Activated CD4-positive, alpha-beta T cell treated with anti-CD3 and anti-CD28 coated beads for 36 hours (primary cell): ENCODE measurements at regions of chr6 and their contacts with region 1.

Region 1: DNA sequence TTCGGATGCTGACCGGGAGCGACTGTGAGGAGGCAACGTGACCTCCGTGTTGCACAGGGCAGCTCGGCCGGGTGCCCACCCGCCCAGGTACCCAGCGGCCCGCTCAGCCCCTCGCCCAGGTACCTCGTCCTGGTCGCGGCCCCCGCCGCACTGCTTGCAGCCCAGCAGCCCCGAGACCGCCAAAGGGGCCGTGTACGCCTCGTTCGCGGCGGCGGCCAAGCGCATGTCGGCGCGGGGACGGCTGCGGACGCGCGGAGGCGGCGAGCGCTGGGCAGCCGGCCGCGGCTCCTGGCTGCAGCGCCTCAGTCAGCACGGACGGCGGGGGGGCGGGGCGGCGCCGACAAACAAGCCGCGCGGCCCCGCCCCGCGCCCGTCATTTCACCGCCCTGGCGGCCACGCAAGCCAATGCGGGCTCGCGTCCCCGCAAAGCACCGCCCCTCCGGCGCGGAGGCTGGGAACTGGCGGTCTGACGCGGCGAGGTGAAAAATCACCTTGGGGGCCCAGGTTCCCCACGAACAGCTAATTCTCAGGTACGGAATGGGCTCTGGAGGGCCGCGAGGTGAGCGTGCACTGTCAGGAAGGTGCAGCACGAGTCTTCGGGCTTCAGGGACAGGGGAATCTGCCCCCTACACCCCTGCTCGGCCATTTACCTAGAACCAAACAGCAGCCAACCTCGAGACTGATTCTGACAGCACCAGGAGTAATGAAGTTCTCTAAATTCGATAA is 85.2 kb downstream of the SESN1 start:
- DNase-seq: peak; percentile 95
- ATAC-seq: peak; percentile 89
- H3K4me3 Mint-ChIP-seq: peak overlapping the region; percentile 94
- H3K27ac Mint-ChIP-seq: peak overlapping the region; percentile 98
- H3K4me1 Mint-ChIP-seq: peaks cover 60% of the 10 kb centered on the region
- H3K27me3 Mint-ChIP-seq: no peaks in the 10 kb centered on the region

Region 2: DNA sequence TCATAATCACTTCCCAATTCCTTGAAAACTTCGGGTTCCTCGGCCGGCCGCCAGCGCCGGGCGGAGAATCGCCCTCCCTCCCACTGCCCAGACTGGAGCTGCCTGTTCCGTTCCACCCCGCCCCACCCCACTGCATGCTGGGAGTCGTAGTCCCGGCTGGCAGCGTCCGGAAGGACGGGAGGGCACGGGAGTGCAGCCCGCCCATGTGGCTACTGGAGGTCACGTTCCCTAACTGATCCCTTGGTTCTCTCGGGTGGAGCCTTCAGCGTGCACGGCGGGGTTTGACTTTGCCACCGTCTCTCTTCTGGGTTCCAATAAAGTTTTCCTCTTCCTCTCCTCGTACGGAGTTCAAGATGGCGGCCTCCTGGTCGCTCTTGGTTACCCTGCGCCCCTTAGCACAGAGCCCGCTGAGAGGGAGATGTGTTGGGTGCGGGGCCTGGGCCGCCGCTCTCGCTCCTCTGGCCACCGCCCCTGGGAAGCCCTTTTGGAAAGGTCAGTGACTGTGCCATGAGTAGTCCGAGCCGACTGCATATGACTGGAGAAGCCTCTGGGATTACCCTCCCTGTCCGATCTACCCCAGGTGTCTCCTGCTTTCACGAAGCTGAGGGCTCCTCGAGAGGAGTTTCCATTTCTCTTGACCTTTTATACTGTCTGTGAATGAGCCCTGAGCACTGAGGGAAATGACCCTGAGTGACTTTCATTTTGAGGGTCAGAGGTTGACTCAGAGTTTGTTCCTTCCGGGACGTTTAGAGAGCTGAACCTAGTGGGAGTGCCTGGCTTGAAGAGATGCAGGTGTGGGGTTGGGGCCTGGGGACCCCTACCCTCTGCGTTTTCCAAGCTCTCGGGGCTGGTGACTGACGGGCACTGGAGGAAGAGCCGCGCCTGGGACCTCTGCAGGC is 714.4 kb before region 1 on chr6 and contains the start of gene AFG1L:
- CTCF ChIA-PET with region 1: no interaction called
- POLR2A ChIA-PET with region 1: no interaction called
- intact Hi-C with region 1: loop called in 1 of 2 experiments (anchors 10 kb)
- DNase-seq: peak; percentile 93
- ATAC-seq: peak; percentile 92
- H3K4me3 Mint-ChIP-seq: peak within 1 kb of the TSS; percentile 99
- H3K27ac Mint-ChIP-seq: peak within 1 kb of the TSS; percentile 100
- H3K4me1 Mint-ChIP-seq: peaks cover 13% of the 10 kb centered on the region
- H3K27me3 Mint-ChIP-seq: no peaks in the 10 kb centered on the region
- total RNA-seq, gene AFG1L: 6.6 TPM

Region 3: GRCh38 chr6:108848116-108848868 is 161.1 kb before region 1 on chr6 and contains the start of gene ARMC2:
- CTCF ChIA-PET with region 1: no interaction called
- POLR2A ChIA-PET with region 1: no interaction called
- intact Hi-C with region 1: loop called in 1 of 2 experiments (anchors 2 kb)
- DNase-seq: peak; percentile 91
- ATAC-seq: peak; percentile 93
- H3K4me3 Mint-ChIP-seq: peak within 1 kb of the TSS; percentile 78
- H3K27ac Mint-ChIP-seq: peak within 1 kb of the TSS; percentile 74
- H3K4me1 Mint-ChIP-seq: peaks cover 23% of the 10 kb centered on the region
- H3K27me3 Mint-ChIP-seq: no peaks in the 10 kb centered on the region
- total RNA-seq, gene ARMC2: 3.9 to 5.2 TPM

Region 4: DNA sequence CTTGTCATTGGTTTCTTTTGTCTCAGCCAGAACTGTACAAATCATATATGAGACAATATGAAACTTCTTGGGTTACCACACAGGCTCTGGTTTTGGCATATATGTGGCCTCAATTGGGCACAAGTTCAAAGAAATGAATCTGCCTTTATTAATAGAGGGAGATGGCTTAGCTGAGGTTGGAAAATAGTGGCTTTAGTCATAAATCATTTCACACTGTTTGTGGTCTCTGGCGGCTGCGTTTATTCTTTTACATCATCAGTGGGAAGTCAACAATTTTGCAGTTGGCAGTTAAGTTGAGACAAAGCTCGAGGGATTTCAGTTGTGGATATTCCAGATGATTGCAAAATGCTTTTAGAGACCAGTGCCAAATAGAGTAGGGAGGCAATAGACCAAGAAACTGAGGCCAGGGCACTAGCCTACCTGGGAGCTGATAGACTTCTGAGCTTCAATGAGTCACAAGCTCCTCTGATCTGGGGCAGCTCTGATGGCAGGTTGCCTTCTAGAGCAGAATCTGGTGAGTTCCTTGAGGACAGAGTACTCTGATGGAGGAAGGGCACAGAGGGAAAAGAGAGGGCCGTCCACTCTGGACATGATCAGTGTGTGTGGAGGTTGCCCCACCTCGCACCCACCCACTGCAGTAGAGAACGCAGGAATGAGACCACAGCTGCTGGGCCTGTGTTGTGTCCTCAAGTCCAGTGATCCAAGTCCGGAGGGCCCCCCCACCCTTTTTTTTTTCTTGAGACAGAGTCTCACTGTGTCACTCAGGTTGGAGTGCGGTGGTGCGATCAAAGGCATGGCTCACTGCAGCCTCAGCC is 87.6 kb before region 1 on chr6:
- CTCF ChIA-PET with region 1: interaction called, 3 read pairs
- POLR2A ChIA-PET with region 1: interaction called, 3 read pairs
- intact Hi-C with region 1: loop called (anchors 1 to 5 kb)
- DNase-seq: peak; percentile 58
- ATAC-seq: peak; percentile 91
- H3K4me3 Mint-ChIP-seq: no peak overlapping the region
- H3K27ac Mint-ChIP-seq: peak overlapping the region; percentile 26
- H3K4me1 Mint-ChIP-seq: peaks cover 33% of the 10 kb centered on the region
- H3K27me3 Mint-ChIP-seq: peaks cover 7% of the 10 kb centered on the region

Region 5: DNA sequence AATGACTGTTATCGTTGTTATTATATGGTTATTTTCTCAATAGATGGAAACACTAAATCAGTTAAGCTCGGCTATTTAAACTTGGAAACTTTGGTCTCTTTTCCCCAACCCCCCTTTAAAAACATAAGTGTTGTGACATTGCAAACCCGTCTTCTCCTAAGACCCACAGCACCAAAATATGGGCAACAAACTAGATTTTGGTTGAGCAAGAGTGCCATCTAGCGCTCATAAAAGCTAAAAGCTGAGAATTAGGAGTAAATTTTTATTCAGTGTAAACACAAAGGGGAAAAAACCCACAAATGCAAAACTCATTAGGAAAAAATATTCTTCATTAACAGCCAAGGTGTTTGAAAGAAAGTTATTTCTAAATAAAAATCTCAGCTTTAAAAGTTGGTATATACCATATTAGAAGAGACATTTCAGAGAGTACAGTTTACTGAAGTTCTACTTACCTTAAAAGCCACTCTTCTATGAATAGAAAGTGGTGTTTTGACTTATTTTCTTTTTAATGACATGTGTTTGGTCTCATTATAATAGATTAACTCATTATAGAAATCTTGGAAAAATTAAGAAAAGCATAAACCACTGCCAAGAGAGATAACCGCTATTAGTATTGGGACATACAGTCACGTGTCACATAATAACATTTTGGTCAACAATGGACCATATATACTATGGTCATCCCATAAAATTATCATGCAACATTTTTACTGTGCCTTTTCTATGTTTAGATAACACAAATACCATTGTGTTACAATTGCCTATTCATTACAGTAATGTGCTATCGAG is 64.1 kb after region 1 on chr6:
- CTCF ChIA-PET with region 1: interaction called, 11 read pairs
- POLR2A ChIA-PET with region 1: interaction called, 4 read pairs
- intact Hi-C with region 1: loop called (anchors 2 kb)
- DNase-seq: peak; percentile 55
- ATAC-seq: peak; percentile 66
- H3K4me3 Mint-ChIP-seq: no peak overlapping the region
- H3K27ac Mint-ChIP-seq: no peak overlapping the region
- H3K4me1 Mint-ChIP-seq: peaks cover 19% of the 10 kb centered on the region
- H3K27me3 Mint-ChIP-seq: no peaks in the 10 kb centered on the region

Region 6: DNA sequence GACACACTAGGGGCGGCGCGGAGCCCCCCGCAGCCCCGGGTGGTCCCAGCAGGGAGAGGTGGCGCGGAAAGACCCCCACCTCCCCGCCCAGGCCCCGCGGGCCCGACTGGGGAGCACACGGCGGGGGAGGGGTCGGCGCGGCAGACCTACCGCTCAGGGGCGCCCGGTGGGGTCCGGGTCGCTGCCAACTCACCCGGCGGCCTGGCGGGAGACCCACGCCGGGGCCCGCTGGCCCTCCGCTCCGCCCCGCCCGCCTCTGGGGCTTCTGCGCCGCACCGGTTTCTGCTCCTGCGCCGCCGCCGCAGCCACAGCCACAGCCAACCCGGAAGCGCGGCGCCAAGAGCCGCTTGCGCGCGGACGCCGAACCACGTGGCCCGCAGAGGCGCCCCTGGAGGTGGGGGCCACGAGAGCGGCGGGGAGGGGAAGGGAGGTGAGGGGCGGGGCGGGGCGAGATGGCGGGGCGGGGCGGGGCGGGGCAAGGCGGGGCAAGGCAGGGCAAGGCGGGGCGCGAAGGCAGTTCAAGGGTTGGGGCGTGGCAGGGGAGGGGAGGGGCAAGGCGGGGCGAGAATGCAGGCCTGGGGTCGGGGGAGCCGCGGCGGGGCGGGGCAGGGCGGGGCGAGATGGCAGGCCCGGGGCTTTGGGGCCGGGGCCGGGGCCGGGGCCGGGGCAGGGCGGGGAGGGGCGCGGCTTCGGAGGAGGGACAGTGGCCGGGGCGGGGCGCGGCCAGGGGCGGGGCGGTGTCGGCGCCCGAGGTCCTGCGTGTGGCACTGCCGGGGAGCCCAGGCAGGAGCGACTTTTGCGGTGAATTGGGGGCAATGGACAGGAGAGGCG is 473.7 kb after region 1 on chr6 and contains the start of gene ZBTB24:
- CTCF ChIA-PET with region 1: no interaction called
- POLR2A ChIA-PET with region 1: no interaction called
- intact Hi-C with region 1: loop called in 1 of 2 experiments (anchors 2 kb)
- DNase-seq: peak; percentile 94
- ATAC-seq: peak; percentile 84
- H3K4me3 Mint-ChIP-seq: peak within 1 kb of the TSS; percentile 96
- H3K27ac Mint-ChIP-seq: peak within 1 kb of the TSS; percentile 94
- H3K4me1 Mint-ChIP-seq: peaks cover 43% of the 10 kb centered on the region
- H3K27me3 Mint-ChIP-seq: no peaks in the 10 kb centered on the region
- total RNA-seq, gene ZBTB24: 12.0 to 14.7 TPM